ENCODE measurements at regions of chr17 and their contacts with region 1.

Region 1: DNA sequence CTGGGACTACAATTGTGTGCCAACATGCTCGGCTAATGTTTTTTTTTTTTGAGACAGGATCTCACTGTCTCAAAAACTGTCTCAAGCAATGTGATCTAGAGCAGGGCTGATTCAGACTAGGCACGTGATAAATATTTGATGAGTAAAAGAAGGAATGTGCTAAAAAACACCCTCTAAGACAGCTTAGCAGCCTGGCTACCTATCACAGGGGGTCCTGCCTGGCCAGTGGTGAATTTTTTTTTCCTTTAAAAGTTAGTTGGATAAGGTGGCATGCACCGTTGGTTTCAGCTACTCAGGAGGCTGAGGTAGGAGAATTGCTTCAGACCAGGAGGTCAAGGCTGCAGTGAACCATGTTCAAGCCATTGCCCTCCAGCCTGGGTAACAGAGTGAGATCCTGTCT is 14.8 kb upstream of the GPATCH8 start:
- DNase-seq: no peak
- H3K4me3 ChIP-seq: no peak overlapping the region
- H3K27ac ChIP-seq: no peak overlapping the region
- H3K4me1 ChIP-seq: no peaks in the 10 kb centered on the region
- H3K27me3 ChIP-seq: no peaks in the 10 kb centered on the region
- CTCF ChIP-seq: no peak

Region 2: GRCh38 chr17:44400226-44400847 is 117.7 kb before region 1 on chr17:
- intact Hi-C with region 1: loop called (anchors 10 kb)
- DNase-seq: no peak
- H3K4me3 ChIP-seq: no peak overlapping the region
- H3K27ac ChIP-seq: no peak overlapping the region
- H3K4me1 ChIP-seq: no peaks in the 10 kb centered on the region
- H3K27me3 ChIP-seq: no peaks in the 10 kb centered on the region
- CTCF ChIP-seq: no peak

Region 3: DNA sequence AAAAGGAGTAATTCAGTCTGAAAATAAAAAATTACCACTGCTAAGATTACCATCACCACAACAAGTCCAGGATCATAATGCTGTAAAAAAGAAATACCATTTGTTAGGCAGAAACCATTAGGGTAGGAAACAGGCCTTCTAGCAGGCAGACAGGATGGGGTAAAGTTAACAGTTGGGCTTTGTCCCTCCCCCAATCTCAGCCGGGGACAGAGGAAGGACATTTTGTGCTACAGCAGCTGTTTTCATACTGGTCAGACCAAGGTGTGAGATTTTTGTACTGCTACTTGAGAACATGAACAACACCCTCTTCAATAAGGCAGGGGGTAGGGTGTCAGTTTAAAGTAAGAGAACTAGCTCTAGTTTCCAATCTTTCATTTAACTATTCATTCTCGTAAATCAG is 79.4 kb before region 1 on chr17:
- intact Hi-C with region 1: no loop called
- DNase-seq: no peak
- H3K4me3 ChIP-seq: no peak overlapping the region
- H3K27ac ChIP-seq: no peak overlapping the region
- H3K4me1 ChIP-seq: no peaks in the 10 kb centered on the region
- H3K27me3 ChIP-seq: no peaks in the 10 kb centered on the region
- CTCF ChIP-seq: no peak

Region 4: DNA sequence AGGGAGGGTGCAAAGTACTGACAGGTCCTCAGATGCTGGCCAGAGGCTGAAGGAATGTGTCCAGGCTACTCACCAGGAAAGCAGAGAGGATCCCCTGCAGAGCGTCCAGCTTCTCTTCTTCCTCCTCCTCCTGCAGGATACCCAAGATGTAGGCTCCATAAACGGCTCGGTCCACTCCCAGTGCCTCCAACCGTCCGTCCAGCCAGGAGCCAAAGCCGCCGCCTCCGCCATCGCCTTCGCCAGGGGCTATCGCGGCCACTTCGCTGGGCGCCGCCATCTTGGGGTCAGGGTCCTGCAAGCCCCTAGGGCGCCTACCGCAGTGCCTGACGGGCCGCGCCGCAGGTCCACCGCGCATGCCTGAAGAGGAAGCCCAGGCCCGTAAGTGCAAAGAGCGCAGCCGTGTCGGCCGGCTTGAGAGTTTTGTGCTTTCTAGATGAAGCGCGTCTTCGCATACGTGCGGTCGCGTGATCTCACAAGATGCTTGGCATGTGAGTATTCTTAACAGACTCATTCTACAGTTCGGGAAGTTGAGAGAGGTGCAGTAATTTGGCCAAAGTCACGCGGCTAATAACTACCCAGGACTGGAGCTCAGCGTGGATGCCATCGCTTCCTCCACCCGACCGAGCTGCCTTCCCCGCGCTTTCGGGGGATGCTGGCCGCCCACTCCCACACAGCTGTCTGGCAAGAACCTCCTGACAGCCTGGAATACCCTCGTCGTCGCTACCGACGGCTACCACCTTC is 171.6 kb after region 1 on chr17 and contains the start of gene CCDC43:
- intact Hi-C with region 1: no loop called
- DNase-seq: peak; percentile 93
- H3K4me3 ChIP-seq: peak within 1 kb of the TSS; percentile 84
- H3K27ac ChIP-seq: peak within 1 kb of the TSS; percentile 68
- H3K4me1 ChIP-seq: no peaks in the 10 kb centered on the region
- H3K27me3 ChIP-seq: no peaks in the 10 kb centered on the region
- CTCF ChIP-seq: no peak
- total RNA-seq, gene CCDC43: 22.2 to 25.5 TPM

Measured in colonic mucosa (tissue), 4 donors.